Activated T-helper 2 cell treated with anti-CD3 and anti-CD28 coated beads, Interferon-gamma antibody, Interleukin-2, Interleukin-4, amounts not matched to agents 10 μg/mL and 5 μg/mL and 100 μg/mL, durations not matched to agents 14 hours and 24 hours and 36 hours (primary cell): ENCODE measurements at regions of chr19 and their contacts with region 1.

Region 1: GRCh38 chr19:39412100-39412866 is at the start of gene PLEKHG2:
- DNase-seq: peak; percentile 96
- H3K4me3 Mint-ChIP-seq: peak within 1 kb of the TSS; percentile 97
- H3K27ac Mint-ChIP-seq: peak within 1 kb of the TSS; percentile 90
- H3K4me1 Mint-ChIP-seq: peaks cover 38% of the 10 kb centered on the region
- H3K27me3 Mint-ChIP-seq: no peaks in the 10 kb centered on the region
- total RNA-seq, gene PLEKHG2: 49.8 and 50.7 TPM in 2 replicates

Region 2: GRCh38 chr19:38912600-38913514 is 499.4 kb before region 1 on chr19:
- intact Hi-C with region 1: no loop called
- DNase-seq: no peak
- H3K4me3 Mint-ChIP-seq: no peak overlapping the region
- H3K27ac Mint-ChIP-seq: peak overlapping the region; percentile 40
- H3K4me1 Mint-ChIP-seq: peaks cover 13% of the 10 kb centered on the region
- H3K27me3 Mint-ChIP-seq: no peaks in the 10 kb centered on the region

Region 3: GRCh38 chr19:39125554-39126311 is 286.6 kb before region 1 on chr19 and contains the start of gene PAK4:
- intact Hi-C with region 1: loop called (anchors 1 kb)
- DNase-seq: peak; percentile 95
- H3K4me3 Mint-ChIP-seq: peak within 1 kb of the TSS; percentile 90
- H3K27ac Mint-ChIP-seq: peak within 1 kb of the TSS; percentile 91
- H3K4me1 Mint-ChIP-seq: peaks cover 28% of the 10 kb centered on the region
- H3K27me3 Mint-ChIP-seq: peaks cover 3% of the 10 kb centered on the region
- total RNA-seq, gene PAK4: 16.5 and 19.4 TPM in 2 replicates

Region 4: DNA sequence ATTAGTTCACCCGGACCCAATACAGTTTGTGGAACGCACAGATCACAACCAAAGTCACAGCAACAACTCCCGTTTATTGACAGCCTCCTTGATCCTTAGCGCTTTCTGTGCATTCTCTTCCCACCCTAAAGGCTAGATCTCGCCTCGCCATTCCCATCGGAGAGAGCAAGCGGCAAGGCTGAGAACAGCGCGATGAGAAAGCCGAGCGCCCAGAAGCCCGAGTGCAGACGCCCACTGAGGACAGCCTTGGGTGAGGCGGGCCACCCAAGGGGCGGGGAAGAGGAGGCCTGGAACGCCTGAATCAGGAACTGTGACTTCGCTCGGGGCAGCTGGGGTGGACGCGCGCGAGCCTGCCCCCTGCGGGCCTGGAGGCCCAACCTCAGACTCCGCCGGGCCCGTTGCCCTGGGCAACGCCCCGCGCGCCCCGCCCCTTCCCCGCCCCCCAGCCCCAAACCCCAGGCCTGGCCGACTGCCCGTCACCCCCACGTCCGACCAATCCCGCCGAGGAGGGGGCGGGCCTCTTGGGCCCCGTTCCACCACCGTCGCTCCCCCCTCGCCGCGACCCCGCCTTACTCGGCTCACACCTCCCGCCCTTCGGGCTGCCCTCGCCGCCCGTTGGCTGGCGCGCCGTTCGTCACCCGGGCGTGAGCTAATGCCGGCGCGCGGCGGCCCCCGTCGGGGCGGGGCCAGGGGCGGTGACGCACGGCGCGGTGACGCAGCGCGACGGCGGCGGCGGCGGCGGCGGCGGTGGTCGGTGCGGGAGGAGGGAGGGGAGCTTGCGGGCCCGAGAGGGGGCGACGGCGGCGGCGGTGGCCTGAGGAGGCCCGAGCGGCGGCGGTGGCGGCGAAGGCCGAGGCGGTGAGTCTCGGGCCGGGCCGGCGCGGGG is 70.3 kb before region 1 on chr19 and contains the start of gene SAMD4B:
- intact Hi-C with region 1: loop called (anchors 1 kb)
- DNase-seq: peak; percentile 99
- H3K4me3 Mint-ChIP-seq: peak within 1 kb of the TSS; percentile 96
- H3K27ac Mint-ChIP-seq: peak within 1 kb of the TSS; percentile 94
- H3K4me1 Mint-ChIP-seq: peaks cover 59% of the 10 kb centered on the region
- H3K27me3 Mint-ChIP-seq: no peaks in the 10 kb centered on the region
- total RNA-seq, gene SAMD4B: 64.0 TPM in 2 replicates

Region 5: DNA sequence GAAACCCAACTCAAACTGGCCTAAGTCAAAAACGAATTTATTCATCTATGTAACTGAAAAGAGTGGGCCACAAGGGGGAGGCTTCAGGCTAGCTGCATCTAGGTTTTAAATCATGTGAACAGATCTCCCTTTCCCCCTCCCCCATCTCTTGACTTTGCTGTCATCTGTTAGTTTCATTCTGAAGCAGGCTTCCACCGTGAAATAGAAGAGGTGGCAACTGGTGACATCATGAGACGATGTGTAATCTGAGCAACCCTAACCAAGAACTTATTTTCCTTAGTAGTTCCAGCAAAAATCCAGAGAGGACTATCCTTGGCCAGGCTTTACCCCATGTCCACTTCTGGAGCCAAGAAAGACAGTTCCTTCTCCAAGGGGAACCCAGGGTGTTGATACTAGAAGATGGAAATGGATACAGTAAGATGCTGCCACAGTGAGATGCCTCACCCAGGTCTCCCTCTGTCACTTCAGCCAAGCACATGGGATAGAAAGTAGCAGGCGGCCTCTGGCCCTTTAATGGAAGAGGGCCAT is 60.7 kb before region 1 on chr19:
- intact Hi-C with region 1: loop called (anchors 2 kb)
- DNase-seq: peak; percentile 52
- H3K4me3 Mint-ChIP-seq: no peak overlapping the region
- H3K27ac Mint-ChIP-seq: peak overlapping the region; percentile 91
- H3K4me1 Mint-ChIP-seq: peaks cover 38% of the 10 kb centered on the region
- H3K27me3 Mint-ChIP-seq: no peaks in the 10 kb centered on the region

Region 6: DNA sequence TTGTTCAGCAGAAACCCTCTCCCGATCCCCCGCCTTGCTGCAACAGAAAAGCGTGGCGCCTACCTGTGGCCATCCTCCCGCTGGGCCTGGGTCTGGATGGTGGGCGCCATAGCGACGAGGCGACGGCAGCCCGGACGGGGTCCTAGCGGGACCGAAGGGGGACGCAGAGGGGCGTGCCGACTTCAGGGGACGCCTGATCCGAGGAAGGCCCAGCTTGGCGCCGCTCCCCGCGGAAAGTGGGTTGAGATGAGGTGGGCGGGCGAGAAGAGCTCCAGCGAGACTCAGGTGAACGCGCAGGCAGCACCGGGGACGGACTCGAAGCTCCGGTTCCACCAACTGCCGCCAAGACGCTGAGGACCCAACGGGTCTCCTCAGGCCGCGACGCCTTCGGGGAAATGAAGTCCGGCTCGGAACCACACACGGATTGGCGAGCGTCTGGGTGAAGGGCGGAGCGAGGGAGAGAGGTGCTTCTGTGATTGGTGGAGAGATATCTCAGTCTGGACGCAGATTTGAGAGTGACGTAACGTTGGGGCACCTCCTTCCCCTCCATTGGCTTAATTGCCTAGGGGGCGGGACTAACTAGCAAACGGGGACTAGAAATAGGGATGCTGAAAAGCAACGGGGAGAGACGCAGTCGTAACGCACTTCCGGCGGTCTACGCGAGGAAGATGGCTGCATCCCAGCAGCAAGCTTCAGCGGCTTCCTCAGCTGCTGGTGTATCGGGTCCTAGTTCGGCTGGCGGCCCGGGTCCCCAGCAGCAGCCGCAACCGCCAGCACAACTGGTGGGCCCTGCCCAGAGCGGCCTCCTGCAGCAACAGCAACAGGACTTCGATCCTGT is 21.3 kb before region 1 on chr19 and contains the starts of genes MED29 and PAF1:
- intact Hi-C with region 1: loop called (anchors 1 kb)
- DNase-seq: peak; percentile 97
- H3K4me3 Mint-ChIP-seq: peak within 1 kb of the TSS; percentile 98
- H3K27ac Mint-ChIP-seq: peak within 1 kb of the TSS; percentile 96
- H3K4me1 Mint-ChIP-seq: peaks cover 22% of the 10 kb centered on the region
- H3K27me3 Mint-ChIP-seq: no peaks in the 10 kb centered on the region
- total RNA-seq, gene MED29: 32.3 and 34.7 TPM in 2 replicates
- total RNA-seq, gene PAF1: 49.5 and 51.1 TPM in 2 replicates

Region 7: DNA sequence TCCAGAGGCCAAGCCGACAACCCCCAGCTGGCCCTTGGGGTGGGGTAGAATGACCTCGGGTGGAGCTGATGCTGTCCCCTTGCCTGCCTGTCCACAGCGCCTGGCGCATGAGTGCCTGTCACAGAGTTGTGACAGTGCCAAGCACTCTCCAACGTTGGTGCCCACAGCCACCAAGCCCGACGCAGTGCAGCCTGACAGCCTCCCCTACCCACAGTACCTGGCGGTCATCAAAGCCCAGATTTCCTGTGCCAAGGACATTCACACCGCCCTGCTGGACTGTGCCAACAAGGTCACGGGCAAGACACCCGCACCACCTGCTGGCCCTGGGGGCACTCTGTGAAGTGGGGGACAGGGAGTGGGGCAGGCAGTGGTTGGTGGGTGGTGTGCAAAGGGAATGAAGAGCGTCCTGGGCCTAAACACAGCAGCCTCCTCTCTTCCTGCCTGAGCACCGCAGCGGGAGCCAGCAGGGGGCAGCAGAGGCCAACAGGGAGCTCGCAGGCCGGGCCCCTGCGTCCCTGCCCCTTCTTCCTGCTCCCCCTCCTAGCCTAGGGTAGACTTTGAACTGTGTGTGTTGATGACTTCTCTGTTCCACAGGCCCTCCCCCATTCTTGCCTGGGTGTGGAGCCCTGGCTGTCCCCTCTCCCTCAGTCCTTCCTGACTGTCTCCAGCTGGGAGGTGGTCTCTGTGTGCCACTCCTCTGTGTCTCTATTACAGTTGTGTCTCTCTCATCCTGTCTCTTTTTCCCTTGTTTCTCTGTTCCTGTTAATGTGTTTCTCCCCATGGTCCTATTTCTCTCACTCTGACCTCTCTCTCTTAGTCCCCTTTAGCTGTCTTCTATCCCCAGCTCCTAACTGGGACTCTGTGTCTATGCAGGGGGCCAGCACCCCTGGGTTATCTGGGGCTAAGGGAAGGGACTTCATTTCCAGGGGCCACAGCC is 14.7 kb before region 1 on chr19:
- intact Hi-C with region 1: loop called (anchors 1 kb)
- DNase-seq: peak; percentile 87
- H3K4me3 Mint-ChIP-seq: peak overlapping the region; percentile 46
- H3K27ac Mint-ChIP-seq: peak overlapping the region; percentile 83
- H3K4me1 Mint-ChIP-seq: peaks cover 45% of the 10 kb centered on the region
- H3K27me3 Mint-ChIP-seq: no peaks in the 10 kb centered on the region

Region 8: GRCh38 chr19:39435499-39436349 is 23.4 kb after region 1 on chr19 and contains the start of gene RPS16:
- intact Hi-C with region 1: loop called (anchors 1 kb)
- DNase-seq: peak; percentile 99
- H3K4me3 Mint-ChIP-seq: peak within 1 kb of the TSS; percentile 100
- H3K27ac Mint-ChIP-seq: peak within 1 kb of the TSS; percentile 99
- H3K4me1 Mint-ChIP-seq: peaks cover 40% of the 10 kb centered on the region
- H3K27me3 Mint-ChIP-seq: no peaks in the 10 kb centered on the region
- total RNA-seq, gene RPS16: 2,627 and 2,674 TPM in 2 replicates

Region 9: GRCh38 chr19:39465956-39466747 is 53.9 kb after region 1 on chr19:
- intact Hi-C with region 1: no loop called
- DNase-seq: no peak
- H3K4me3 Mint-ChIP-seq: no peak overlapping the region
- H3K27ac Mint-ChIP-seq: no peak overlapping the region
- H3K4me1 Mint-ChIP-seq: peaks cover 8% of the 10 kb centered on the region
- H3K27me3 Mint-ChIP-seq: no peaks in the 10 kb centered on the region

Region 10: GRCh38 chr19:39641773-39642172 is 229.5 kb after region 1 on chr19:
- intact Hi-C with region 1: no loop called
- DNase-seq: no peak
- H3K4me3 Mint-ChIP-seq: no peak overlapping the region
- H3K27ac Mint-ChIP-seq: no peak overlapping the region
- H3K4me1 Mint-ChIP-seq: no peaks in the 10 kb centered on the region
- H3K27me3 Mint-ChIP-seq: peaks cover 4% of the 10 kb centered on the region